ENCODE measurements at regions of chr6 and their contacts with region 1.

Region 1: DNA sequence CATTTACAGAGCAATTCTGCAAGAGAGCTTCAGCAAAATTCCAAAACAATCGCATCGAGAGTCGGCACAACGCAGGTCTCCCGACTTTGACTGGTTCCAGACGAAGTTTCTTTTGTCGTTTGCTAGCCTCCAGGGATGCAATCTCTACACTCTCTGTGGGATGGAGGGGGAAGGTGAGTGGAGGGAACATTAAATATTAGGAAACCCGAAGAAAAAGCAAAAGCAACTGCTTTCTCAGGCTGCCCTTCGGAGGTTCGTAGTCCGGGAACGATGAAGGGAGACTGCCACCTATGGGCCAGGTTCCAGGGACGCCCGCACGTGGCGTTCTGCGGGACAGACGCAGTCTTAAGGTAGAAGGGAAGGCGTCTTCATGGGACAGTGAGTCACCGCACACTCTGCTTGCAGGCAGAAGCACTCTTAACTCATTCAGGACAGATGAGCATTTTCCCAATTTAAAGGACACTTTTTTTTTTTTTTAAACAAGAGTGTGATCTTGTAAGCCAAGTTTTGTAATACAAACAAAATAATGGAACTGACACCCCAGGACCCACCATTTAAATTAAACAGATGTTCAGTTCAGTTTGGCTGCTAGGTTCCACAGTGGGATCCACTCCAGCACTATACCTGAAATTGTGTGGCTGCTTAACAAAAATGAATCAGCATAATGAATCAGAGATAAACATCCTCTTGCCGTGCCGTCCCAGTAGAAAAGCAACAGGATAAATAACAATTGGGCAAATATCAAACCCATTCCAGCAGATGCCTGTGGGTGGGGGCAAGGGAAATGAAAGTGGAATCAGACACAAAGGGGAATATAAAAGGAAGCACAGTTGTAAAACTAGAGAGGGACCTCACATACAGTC is 65.8 kb upstream of the ARMC2 start:
- DNase-seq: peak; percentile 90
- H3K4me3 Mint-ChIP-seq: peak overlapping the region; percentile 69
- H3K27ac Mint-ChIP-seq: peak overlapping the region; percentile 55
- H3K4me1 Mint-ChIP-seq: peaks cover 42% of the 10 kb centered on the region
- H3K27me3 Mint-ChIP-seq: no peaks in the 10 kb centered on the region
- CTCF ChIP-seq: peak; percentile 71

Region 2: GRCh38 chr6:108235127-108235526 is 547.3 kb before region 1 on chr6:
- CTCF ChIA-PET with region 1: no interaction called
- intact Hi-C with region 1: no loop called
- DNase-seq: no peak
- H3K4me3 Mint-ChIP-seq: no peak overlapping the region
- H3K27ac Mint-ChIP-seq: no peak overlapping the region
- H3K4me1 Mint-ChIP-seq: no peaks in the 10 kb centered on the region
- H3K27me3 Mint-ChIP-seq: no peaks in the 10 kb centered on the region
- CTCF ChIP-seq: no peak

Region 3: DNA sequence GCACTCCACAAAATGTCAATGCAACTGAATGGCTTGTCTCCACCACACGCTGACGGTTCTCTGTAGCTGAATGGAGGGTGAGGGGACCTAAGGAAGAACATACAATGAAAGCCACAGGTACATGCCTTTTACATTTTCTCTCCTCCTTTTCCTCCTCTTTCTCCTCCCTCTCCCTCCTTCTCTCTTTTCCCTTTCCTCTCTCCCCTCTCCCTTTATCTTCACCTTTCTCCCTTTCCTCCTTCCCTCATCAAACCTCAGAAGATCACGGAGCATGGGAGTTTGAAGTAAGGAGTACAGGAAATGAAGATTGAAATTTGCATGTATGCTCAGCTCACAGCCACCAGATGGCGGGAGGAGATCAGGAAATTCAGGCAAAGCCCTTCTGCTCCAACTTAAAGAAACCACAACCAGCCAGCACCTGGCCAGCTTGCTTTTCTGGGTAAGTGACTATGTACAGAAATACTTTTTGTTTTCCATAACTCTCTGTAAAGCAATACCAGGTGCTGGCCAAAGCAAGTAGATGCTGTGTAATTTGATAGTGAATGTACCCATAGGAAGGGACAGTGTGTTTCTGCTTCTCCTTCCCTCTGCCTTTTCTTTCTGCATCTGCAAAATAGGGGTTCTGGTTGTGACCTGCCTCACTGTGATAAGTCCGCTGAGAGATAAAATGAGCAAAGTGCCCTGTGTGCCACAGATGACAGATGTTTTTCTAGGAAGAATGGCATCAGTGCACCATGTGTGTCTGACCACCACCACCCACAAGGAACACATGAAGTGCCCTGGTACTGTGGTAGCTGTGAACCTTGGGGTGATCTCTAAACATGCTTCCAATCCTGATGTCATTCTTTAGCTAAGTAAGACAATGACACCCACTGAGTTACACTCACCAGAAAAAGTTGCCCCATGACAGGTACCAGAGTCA is 240.3 kb before region 1 on chr6:
- CTCF ChIA-PET with region 1: interaction called, 5 read pairs
- intact Hi-C with region 1: loop called (anchors 5 kb)
- DNase-seq: peak; percentile 76
- H3K4me3 Mint-ChIP-seq: peak overlapping the region; percentile 59
- H3K27ac Mint-ChIP-seq: peak overlapping the region; percentile 5
- H3K4me1 Mint-ChIP-seq: no peaks in the 10 kb centered on the region
- H3K27me3 Mint-ChIP-seq: no peaks in the 10 kb centered on the region
- CTCF ChIP-seq: peak; percentile 74

Region 4: DNA sequence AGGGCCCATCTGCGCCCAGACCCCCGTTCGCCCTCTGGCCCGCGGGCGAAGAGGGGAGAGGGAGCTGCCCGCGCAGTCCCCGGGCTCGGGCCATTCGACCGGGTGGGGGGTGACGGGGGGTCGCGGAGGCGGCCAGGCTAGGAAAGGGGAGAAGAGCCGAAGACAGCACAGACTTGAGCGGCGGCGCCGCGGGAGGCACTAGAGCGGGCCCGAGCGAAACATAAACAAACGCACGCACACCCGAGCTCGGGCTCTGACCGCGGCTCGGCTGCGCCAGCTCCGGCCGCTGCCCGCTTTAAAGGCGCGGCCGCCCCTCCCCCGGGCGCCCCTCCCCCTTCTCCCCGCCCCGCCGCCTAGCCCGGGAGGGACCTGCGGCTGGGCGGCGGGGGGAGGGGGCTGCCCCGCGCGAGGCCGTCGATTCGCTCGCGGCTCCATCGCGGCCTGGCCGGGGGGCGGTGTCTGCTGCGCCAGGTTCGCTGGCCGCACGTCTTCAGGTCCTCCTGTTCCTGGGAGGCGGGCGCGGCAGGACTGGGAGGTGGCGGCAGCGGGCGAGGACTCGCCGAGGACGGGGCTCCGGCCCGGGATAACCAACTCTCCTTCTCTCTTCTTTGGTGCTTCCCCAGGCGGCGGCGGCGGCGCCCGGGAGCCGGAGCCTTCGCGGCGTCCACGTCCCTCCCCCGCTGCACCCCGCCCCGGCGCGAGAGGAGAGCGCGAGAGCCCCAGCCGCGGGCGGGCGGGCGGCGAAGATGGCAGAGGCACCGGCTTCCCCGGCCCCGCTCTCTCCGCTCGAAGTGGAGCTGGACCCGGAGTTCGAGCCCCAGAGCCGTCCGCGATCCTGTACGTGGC is 221.7 kb before region 1 on chr6 and contains the start of gene FOXO3:
- CTCF ChIA-PET with region 1: no interaction called
- intact Hi-C with region 1: loop called (anchors 1 kb)
- DNase-seq: peak; percentile 94
- H3K4me3 Mint-ChIP-seq: peak within 1 kb of the TSS; percentile 94
- H3K27ac Mint-ChIP-seq: peak within 1 kb of the TSS; percentile 93
- H3K4me1 Mint-ChIP-seq: peaks cover 20% of the 10 kb centered on the region
- H3K27me3 Mint-ChIP-seq: no peaks in the 10 kb centered on the region
- CTCF ChIP-seq: no peak
- total RNA-seq, gene FOXO3: 44.1 and 45.5 TPM in 2 replicates

Region 5: DNA sequence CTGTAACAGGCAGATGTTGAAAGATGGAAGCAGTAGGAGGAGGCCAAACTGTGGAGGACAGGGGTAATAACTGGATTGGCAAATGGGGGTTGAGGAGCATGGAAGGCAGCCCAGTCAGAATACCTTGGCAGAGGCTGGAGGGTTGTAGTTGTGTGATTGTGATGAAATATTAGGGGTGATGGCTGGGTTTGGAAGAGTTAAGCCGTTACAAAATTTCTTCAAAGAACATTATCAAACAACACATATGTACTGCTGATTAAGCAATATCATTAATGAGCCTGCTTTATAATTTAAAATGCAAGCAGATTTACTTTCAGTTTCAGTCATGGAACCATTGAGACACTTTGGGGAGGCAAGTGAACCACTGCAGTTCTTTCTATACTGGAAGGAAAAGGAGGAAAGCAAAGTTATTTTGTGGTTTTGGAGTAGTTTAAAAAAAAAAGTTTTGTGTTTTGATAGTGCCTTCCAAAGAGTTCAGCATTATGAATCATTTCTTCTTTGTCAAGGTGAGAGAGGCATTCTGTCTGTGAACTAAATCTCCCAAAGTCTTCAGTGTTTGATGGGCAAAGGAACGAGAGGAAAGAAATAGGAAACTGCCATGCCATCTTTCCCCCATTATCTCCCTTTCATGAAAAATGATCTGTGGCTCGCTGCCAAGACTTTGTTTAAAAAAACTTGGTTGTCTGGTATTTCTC is 201.0 kb before region 1 on chr6:
- CTCF ChIA-PET with region 1: no interaction called
- intact Hi-C with region 1: loop called (anchors 5 kb)
- DNase-seq: no peak
- H3K4me3 Mint-ChIP-seq: peak overlapping the region; percentile 33
- H3K27ac Mint-ChIP-seq: peak overlapping the region; percentile 31
- H3K4me1 Mint-ChIP-seq: peaks cover 62% of the 10 kb centered on the region
- H3K27me3 Mint-ChIP-seq: no peaks in the 10 kb centered on the region
- CTCF ChIP-seq: no peak

Region 6: GRCh38 chr6:108673602-108674001 is 108.8 kb before region 1 on chr6:
- CTCF ChIA-PET with region 1: no interaction called
- intact Hi-C with region 1: loop called (anchors 10 kb)
- DNase-seq: peak; percentile 68
- H3K4me3 Mint-ChIP-seq: peak overlapping the region; percentile 54
- H3K27ac Mint-ChIP-seq: peak overlapping the region; percentile 96
- H3K4me1 Mint-ChIP-seq: peaks cover 56% of the 10 kb centered on the region
- H3K27me3 Mint-ChIP-seq: no peaks in the 10 kb centered on the region
- CTCF ChIP-seq: no peak

Region 7: DNA sequence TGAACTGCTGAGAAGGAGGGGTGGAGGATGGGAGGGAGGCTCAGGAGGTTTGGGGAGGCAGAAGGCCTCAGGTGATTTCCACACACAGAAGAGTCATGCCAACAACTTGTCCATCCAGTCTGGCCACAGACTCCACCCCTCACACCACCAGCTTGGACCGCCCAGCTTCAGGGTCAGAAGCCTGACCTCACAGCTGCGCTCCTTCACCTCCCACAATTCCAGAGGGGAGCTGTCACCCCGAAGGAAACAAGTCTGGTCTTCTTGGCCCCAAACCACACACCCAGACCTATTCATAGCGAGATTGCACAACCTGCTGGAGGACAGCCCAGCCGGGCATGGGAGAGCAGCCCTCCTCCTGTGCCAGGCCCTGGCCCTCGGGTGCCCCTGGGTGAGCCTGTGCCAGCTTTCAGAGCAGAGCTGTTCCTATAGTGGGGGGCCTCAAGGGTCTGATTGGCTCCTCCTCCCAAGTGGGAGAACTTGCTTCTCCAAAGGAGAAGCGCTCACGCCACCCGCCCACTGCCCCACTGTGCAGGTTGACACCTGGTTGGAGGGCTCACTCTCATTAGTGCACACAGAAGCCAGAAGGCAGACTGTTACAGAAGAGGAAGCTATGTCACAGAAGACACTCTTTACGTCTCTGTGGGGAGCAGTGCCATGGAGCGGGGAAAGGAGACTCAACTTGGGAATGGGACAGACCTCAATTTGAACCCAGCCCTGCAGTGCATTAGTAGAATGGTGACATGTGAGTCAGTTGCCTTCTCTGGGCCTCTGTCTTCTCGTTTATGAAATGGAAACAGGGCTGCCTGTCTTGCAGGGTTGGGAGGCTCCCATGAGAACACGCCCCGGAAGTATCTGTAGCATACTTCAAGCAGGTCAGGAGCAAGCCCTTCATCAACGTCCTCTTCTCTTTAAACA is 92.9 kb before region 1 on chr6:
- CTCF ChIA-PET with region 1: no interaction called
- intact Hi-C with region 1: no loop called
- DNase-seq: peak; percentile 93
- H3K4me3 Mint-ChIP-seq: peak overlapping the region; percentile 49
- H3K27ac Mint-ChIP-seq: peak overlapping the region; percentile 92
- H3K4me1 Mint-ChIP-seq: peaks cover 66% of the 10 kb centered on the region
- H3K27me3 Mint-ChIP-seq: no peaks in the 10 kb centered on the region
- CTCF ChIP-seq: no peak

Region 8: GRCh38 chr6:108737594-108738546 is 44.5 kb before region 1 on chr6:
- CTCF ChIA-PET with region 1: no interaction called
- intact Hi-C with region 1: loop called (anchors 5 kb)
- DNase-seq: peak; percentile 83
- H3K4me3 Mint-ChIP-seq: peak overlapping the region; percentile 56
- H3K27ac Mint-ChIP-seq: peak overlapping the region; percentile 99
- H3K4me1 Mint-ChIP-seq: peaks cover 81% of the 10 kb centered on the region
- H3K27me3 Mint-ChIP-seq: no peaks in the 10 kb centered on the region
- CTCF ChIP-seq: no peak

Region 9: DNA sequence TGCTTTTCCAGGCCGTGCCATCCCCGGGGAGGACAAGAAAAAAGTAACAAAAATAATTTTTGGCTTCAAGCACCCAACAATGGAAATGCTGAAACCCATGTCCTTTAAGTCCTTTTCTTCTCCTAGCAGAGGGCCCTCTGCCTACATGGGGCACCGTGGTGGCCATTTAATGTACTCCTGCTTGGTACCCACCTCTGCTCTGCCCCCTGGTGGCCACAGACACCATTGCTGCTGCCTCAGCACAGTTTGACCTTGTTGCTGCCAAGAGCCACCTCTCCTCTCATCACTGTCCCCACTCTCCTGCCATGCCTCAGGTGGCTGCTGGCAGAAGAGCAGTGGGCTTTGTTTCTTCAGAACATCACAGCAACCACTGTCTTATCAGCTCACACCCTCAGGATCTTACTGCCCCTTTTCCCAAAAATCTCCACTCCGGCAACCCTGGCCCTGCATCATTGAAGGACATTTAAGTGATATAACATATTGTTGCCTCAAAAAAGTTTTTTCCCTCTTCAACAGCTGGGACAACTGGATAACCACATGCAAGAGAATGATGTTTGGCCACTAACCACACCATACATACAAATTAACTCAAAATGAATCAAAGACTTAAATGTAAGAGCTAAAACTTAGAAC is 52.9 kb after region 1 on chr6:
- CTCF ChIA-PET with region 1: no interaction called
- intact Hi-C with region 1: loop called (anchors 5 kb)
- DNase-seq: peak; percentile 87
- H3K4me3 Mint-ChIP-seq: no peak overlapping the region
- H3K27ac Mint-ChIP-seq: no peak overlapping the region
- H3K4me1 Mint-ChIP-seq: peaks cover 8% of the 10 kb centered on the region
- H3K27me3 Mint-ChIP-seq: no peaks in the 10 kb centered on the region
- CTCF ChIP-seq: peak; percentile 95

Measured in Calu3 (cell line).